H1 (cell line): ENCODE measurements at regions of chr7 and their contacts with region 1.

Region 1: DNA sequence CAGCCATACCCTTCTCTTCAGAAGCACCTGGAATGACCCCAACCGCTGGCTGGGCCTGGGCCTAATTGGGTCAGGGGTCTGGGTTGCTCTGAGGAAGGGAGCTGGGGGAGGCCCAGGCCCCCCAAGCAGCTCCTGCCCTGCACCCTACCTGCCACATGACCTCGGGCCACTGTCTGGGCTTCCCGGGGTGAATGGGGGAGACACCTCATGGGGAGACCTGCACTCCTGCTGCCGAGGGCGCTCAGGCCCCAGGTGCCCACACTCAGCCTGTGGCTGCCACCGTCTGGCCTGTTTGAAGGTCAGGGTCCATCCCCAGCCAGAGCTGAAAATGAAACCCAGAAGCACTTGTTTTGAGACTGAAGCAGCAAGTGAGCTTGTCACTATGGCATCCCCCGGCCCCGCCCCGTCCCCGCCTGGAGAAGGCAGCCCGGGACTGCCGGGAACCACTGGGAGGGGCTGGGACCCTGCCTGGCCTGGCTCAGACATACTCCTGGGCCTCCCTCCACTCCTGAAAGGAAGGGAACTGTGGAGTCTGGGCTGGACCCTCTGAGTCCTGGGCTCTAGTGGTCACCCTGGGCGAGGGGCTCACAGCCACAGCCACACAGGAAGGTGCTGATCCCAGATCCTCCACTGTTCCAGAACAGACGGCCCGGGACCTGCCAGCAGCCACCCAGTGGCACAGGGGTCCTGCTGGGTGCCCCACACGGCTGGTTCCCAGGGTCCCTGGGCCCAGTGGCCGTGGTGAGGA is 7.4 kb upstream of the MICALL2 start:
- DNase-seq: peak in 1 of 2 experiments; percentile 81
- H3K4me3 ChIP-seq: no peak overlapping the region
- H3K27ac ChIP-seq: 0 out of 2 replicates have a peak overlapping the region, but pooled peaks have one; percentile 15
- H3K4me1 ChIP-seq: no peaks in the 10 kb centered on the region; a peak in 2 of 7 replicates
- H3K27me3 ChIP-seq: no peaks in the 10 kb centered on the region
- CTCF ChIP-seq: no peak
- EP300 ChIP-seq: no peak
- POLR2A ChIP-seq: peak in 1 of 2 experiments; percentile 21; a peak in 1 of 3 replicates
- RAD21 ChIP-seq: no peak

Region 2: DNA sequence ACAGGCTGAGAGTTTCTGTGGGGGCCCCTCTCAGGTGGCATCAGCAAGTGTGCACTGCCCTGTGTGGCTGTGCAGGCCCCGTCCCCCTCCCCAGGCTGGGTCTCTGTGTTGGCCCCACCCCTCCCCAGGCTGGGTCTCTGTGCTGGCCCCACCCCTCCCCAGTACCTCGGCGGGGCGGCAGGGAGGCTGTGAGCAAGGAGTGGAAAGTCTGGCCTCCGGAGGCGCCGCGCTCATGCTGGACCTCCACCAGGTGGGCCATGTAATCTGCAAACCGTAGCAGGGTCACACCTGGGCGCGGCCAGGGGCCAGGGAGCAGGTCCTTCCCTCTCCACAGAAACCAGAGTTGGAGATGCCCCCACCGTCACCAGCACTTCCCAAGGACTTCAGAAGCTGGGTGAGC is 14.0 kb after region 1 on chr7:
- CTCF ChIA-PET with region 1: interaction called, 3 read pairs
- POLR2A ChIA-PET with region 1: interaction called, 11 read pairs
- DNase-seq: no peak
- H3K4me3 ChIP-seq: no peak overlapping the region
- H3K27ac ChIP-seq: no peak overlapping the region
- H3K4me1 ChIP-seq: no peaks in the 10 kb centered on the region
- H3K27me3 ChIP-seq: no peaks in the 10 kb centered on the region
- CTCF ChIP-seq: no peak
- EP300 ChIP-seq: no peak
- POLR2A ChIP-seq: no peak
- RAD21 ChIP-seq: no peak